Mammary epithelial cell (primary cell): ENCODE measurements at regions of chr22 and their contacts with region 1.

Region 1: DNA sequence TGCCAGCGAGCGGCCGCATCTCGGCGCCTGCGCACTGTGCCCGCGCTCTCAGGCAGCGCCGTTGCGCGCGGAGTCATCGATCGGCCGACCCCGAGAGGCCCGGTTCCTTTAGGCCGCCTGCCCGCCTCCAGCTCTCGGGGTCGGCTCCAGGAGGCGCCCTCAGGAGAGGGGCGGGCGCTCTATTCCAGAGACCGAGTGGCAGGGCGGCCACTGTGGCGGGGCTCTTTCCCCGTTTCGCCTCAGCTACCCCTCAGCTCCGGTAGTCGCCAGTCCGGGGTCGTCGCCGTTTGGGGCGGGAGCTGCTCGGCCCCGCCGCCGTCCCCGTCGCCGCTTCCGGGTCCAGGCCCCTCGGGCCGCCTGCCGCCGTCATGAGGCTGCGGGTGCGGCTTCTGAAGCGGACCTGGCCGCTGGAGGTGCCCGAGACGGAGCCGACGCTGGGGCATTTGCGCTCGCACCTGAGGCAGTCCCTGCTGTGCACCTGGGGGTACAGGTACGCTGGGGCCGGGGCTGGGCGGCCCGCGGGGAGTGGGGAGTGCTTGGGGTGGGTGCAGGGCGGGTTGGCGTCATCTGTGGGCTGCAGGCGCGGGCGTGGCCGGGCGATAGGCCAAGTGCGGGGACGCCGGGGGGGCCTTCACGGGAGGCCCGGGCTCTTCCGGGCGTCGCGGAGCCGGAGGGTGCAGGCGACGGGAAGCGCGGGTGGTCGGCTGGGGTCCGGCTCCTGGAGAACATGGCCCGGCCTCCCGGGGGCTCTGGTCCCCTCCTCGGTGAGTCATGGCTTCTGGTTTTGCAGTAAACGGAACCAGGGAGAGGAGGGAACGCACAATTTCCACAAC is at the start of gene FBXO7:
- DNase-seq: peak; percentile 92
- H3K4me3 ChIP-seq: peak within 1 kb of the TSS; percentile 65 to 89 (median 83)
- H3K27ac ChIP-seq: peak within 1 kb of the TSS; percentile 87
- H3K4me1 ChIP-seq: peaks cover 17% of the 10 kb centered on the region
- H3K27me3 ChIP-seq: no peaks in the 10 kb centered on the region
- CTCF ChIP-seq: peak in 1 of 2 donors; percentile 32
- total RNA-seq, gene FBXO7: 67.2 to 69.0 TPM

Region 2: DNA sequence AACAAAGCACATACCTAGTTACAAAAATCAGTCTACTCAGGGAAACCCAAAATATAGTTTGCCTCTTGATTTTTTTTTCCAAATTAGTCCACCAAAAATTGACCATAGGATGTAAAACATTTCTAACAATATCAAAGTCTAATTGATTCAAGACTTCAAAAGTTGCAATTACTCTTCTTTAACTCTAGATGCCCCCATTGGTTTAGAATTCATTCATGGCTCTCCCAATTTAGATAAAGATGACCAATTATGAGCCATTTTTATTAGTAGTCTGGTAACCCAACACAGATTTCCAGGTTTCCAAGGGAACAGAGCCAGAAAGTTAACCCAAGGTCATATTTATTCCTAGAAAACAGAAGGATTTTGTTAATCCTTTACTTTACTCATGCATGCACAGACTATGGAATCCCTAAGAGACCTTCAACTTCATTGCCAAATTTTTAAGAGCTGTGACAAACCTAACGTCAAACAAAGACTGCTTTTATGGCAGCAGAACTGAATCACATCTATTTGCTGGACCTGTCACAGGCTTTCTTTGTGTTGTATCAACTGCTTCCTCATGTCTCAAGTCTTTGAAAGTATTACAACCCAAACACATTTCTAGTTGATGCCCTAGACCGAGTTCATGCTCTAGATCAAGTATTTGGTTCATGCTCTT is 371.1 kb before region 1 on chr22:
- CTCF ChIA-PET with region 1: no interaction called
- dilution Hi-C with region 1: no loop called
- in situ Hi-C with region 1: no loop called
- intact Hi-C with region 1: loop called (anchors 5 kb)
- DNase-seq: no peak
- H3K4me3 ChIP-seq: no peak overlapping the region
- H3K27ac ChIP-seq: no peak overlapping the region
- H3K4me1 ChIP-seq: no peaks in the 10 kb centered on the region
- H3K27me3 ChIP-seq: no peaks in the 10 kb centered on the region
- CTCF ChIP-seq: peak; percentile 32 to 52

Region 3: GRCh38 chr22:32265882-32266767 is 208.7 kb before region 1 on chr22:
- CTCF ChIA-PET with region 1: no interaction called
- dilution Hi-C with region 1: no loop called
- in situ Hi-C with region 1: no loop called
- intact Hi-C with region 1: loop called (anchors 5 kb)
- DNase-seq: peak; percentile 44
- H3K4me3 ChIP-seq: no peak overlapping the region
- H3K27ac ChIP-seq: no peak overlapping the region
- H3K4me1 ChIP-seq: no peaks in the 10 kb centered on the region
- H3K27me3 ChIP-seq: no peaks in the 10 kb centered on the region
- CTCF ChIP-seq: peak; percentile 90 to 92

Region 4: DNA sequence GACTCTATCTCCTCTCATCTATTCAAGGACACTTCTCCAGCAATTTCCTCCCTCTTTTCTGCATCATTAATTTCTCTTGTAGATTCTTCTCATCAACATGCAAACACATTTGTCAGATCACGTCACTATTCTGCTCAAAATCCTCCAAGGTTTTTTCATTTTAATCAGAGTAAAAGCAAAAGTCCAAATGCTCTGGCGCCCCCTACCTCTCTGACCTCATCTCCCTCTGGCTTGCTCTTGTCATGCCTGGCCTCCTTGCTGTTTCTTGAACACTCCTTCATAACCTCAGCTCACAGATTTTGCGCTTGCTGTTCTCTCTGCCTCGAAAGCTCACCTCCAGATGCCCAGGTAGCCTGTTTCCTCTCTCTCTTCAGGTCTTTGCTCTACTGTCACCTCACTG is 85.2 kb before region 1 on chr22:
- CTCF ChIA-PET with region 1: no interaction called
- dilution Hi-C with region 1: no loop called
- in situ Hi-C with region 1: no loop called
- intact Hi-C with region 1: no loop called
- DNase-seq: no peak
- H3K4me3 ChIP-seq: no peak overlapping the region
- H3K27ac ChIP-seq: no peak overlapping the region
- H3K4me1 ChIP-seq: no peaks in the 10 kb centered on the region
- H3K27me3 ChIP-seq: no peaks in the 10 kb centered on the region
- CTCF ChIP-seq: peak; percentile 26 to 39

Region 5: GRCh38 chr22:32411829-32412592 is 62.8 kb before region 1 on chr22 and contains the start of gene RTCB:
- CTCF ChIA-PET with region 1: no interaction called
- dilution Hi-C with region 1: no loop called
- in situ Hi-C with region 1: loop called (anchors 5 kb)
- intact Hi-C with region 1: loop called (anchors 1 kb)
- DNase-seq: peak; percentile 91
- H3K4me3 ChIP-seq: peak within 1 kb of the TSS; percentile 83 to 94 (median 86)
- H3K27ac ChIP-seq: peak within 1 kb of the TSS; percentile 80
- H3K4me1 ChIP-seq: peaks cover 25% of the 10 kb centered on the region
- H3K27me3 ChIP-seq: no peaks in the 10 kb centered on the region
- CTCF ChIP-seq: no peak
- total RNA-seq, gene RTCB: 75.8 to 84.7 TPM

Region 6: GRCh38 chr22:32426156-32426555 is 48.7 kb before region 1 on chr22:
- CTCF ChIA-PET with region 1: no interaction called
- dilution Hi-C with region 1: no loop called
- in situ Hi-C with region 1: no loop called
- intact Hi-C with region 1: no loop called
- DNase-seq: no peak
- H3K4me3 ChIP-seq: no peak overlapping the region
- H3K27ac ChIP-seq: no peak overlapping the region
- H3K4me1 ChIP-seq: no peaks in the 10 kb centered on the region
- H3K27me3 ChIP-seq: peaks cover 2% of the 10 kb centered on the region
- CTCF ChIP-seq: no peak

Region 7: DNA sequence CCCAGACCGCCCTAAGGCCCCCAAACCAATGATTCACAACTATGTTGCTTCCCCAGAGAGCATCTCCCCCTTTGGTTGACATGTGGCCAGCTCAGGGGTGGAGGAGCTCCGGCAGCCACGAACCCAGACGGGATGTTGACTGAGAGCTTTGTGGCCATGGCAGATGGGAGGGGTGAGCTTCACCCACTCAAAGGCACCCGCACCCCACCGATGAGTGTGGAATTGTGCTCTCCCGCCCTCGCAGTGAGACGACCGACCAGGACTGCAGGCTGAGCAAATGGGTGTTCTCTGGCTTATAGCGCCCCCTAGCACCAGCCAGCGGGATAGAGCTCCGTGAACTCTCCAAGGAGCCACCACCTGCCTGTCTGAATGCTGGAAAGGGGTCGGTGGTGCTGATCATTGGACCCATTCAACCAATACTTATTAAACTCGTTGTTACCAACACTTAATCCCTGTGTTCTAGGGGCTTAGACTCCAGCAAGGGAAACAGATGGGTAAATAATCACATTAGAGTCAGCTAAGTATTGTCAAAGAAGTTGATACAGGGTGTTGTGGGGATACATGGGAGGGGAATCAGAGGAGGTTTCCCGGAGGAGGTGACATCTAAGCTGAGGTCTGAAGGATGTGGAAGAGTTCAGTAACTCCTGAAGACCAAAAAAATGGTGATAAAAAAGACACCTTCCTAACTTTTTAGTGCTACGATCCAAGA is 322.2 kb after region 1 on chr22:
- CTCF ChIA-PET with region 1: no interaction called
- dilution Hi-C with region 1: no loop called
- in situ Hi-C with region 1: no loop called
- intact Hi-C with region 1: loop called (anchors 5 kb)
- DNase-seq: peak; percentile 48
- H3K4me3 ChIP-seq: peak overlapping the region in 1 of 3 experiments; percentile 3
- H3K27ac ChIP-seq: no peak overlapping the region
- H3K4me1 ChIP-seq: peaks cover 11% of the 10 kb centered on the region
- H3K27me3 ChIP-seq: no peaks in the 10 kb centered on the region
- CTCF ChIP-seq: peak; percentile 96